B cell (primary cell): ENCODE measurements at regions of chr11 and their contacts with region 1.

Region 1: DNA sequence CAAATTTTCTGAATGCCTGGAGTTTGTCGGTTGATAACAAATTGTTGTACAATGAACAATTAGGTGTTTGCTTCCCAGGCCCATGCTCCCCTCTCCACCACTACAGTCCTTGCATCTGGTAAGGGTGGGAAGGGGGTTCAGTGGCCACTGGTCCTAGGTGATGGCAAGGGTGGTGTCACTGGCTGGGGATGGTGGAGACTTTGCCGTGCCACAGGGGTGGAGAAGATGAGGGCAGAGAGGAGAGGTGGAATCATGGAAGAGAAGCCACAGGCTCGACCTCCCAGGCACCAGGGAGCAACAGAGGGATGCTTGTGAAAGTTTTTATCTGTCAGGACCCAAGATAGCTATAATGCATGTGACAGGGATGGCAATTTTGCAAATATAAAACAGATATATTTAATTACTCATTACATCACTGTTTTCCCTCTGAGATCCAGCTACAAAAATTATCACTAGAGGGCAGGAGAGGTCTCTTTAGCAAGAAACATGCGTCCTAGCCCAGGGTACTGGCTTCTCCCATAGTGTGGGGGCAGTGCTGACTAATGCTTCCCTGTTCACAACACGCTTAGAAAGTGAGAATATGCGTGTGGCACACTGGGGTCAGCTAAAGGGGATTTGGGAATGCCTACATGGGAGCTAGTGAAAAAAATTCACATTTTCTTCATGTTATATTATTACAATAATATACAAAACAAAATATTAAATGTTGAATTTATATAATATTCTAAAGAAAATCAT is 49.0 kb upstream of the AMPD3 start:
- DNase-seq: peak; percentile 72
- ATAC-seq: peak; percentile 85
- H3K4me3 ChIP-seq: no peak overlapping the region
- H3K4me3 Mint-ChIP-seq: no peak overlapping the region
- H3K27ac ChIP-seq: no peak overlapping the region
- H3K27ac Mint-ChIP-seq: no peak overlapping the region
- H3K4me1 ChIP-seq: peaks cover 4 to 11% of the 10 kb centered on the region in 2 donors
- H3K4me1 Mint-ChIP-seq: peaks cover 7% of the 10 kb centered on the region
- H3K27me3 ChIP-seq: no peaks in the 10 kb centered on the region
- H3K27me3 Mint-ChIP-seq: no peaks in the 10 kb centered on the region
- CTCF ChIP-seq: peak; percentile 78

Region 2: DNA sequence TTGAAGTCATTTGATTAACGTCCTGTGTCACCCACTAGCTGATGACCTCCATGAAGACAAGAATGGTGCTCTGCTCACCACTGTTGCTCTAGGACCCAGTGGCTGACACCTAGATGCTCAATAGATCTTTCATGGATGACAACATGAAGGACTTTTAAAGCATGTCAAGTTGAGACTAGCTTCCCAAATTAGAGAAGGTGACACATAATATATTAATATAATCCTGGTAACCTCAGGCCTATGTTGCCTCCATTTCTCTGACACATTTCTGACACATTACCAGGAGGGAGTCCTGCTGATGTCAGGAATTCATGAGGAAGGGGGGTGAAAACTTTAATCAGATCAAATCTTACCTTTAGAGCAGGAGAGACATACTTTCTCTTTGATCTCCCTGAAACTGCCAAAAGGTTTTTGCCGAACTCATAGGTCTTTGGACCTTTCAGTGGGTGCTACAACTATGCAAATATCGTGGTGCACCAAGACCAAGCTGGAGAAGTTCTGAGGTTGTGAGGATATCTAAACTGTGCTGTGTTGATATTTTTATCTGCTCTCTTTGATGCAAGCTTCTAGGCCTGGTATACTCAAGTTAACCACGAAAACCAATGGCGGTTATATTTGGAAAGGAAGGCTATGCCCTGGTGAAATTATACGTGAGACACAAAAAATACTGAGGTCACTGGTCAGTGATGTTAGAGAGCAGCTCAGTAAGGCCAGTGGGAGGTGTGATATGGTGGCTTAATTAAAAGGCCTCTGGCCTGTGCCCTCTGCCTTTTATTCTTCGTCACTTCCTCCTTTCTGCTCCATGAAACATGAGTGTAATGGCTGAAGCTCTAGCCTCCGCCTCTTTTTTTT is 35.9 kb after region 1 on chr11:
- CTCF ChIA-PET with region 1: interaction called, 10 read pairs
- POLR2A ChIA-PET with region 1: no interaction called
- intact Hi-C with region 1: no loop called
- DNase-seq: peak; percentile 85
- ATAC-seq: peak; percentile 89
- H3K4me3 ChIP-seq: peak overlapping the region in 2 of 5 experiments; percentile 1 to 20
- H3K4me3 Mint-ChIP-seq: peak overlapping the region; percentile 61
- H3K27ac ChIP-seq: peak overlapping the region; percentile 89 to 96
- H3K27ac Mint-ChIP-seq: peak overlapping the region; percentile 97
- H3K4me1 ChIP-seq: peaks cover 38 to 41% of the 10 kb centered on the region in 2 donors
- H3K4me1 Mint-ChIP-seq: peaks cover 39% of the 10 kb centered on the region
- H3K27me3 ChIP-seq: no peaks in the 10 kb centered on the region
- H3K27me3 Mint-ChIP-seq: no peaks in the 10 kb centered on the region
- CTCF ChIP-seq: no peak

Region 3: DNA sequence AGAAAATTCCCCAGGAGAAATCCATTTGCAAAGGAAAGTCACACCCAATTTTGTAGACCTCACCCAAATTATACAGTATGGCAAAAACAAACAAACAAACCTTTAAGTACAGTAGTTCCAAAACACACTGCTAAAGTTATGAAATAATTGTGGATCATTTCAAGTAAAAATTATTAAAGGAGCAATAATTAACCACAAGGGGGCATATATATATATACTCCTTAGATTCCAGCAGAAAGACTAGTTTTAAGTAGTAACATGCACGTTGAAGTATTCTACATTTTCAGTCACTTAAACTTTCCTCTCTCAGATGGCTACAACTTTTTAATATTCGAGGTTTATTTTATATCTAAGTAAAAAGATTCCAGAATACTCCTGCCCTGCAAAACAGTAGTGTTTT is 108.2 kb after region 1 on chr11:
- CTCF ChIA-PET with region 1: interaction called, 42 read pairs
- POLR2A ChIA-PET with region 1: no interaction called
- intact Hi-C with region 1: no loop called
- DNase-seq: peak; percentile 42
- ATAC-seq: no peak
- H3K4me3 ChIP-seq: no peak overlapping the region
- H3K4me3 Mint-ChIP-seq: no peak overlapping the region
- H3K27ac ChIP-seq: peak overlapping the region in 1 of 2 donors; percentile 7
- H3K27ac Mint-ChIP-seq: peak overlapping the region; percentile 43
- H3K4me1 ChIP-seq: no peaks in the 10 kb centered on the region
- H3K4me1 Mint-ChIP-seq: peaks cover 16% of the 10 kb centered on the region
- H3K27me3 ChIP-seq: no peaks in the 10 kb centered on the region
- H3K27me3 Mint-ChIP-seq: no peaks in the 10 kb centered on the region
- CTCF ChIP-seq: peak; percentile 62